ENCODE measurements at regions of chr7 and their contacts with region 1.

Region 1: GRCh38 chr7:20114468-20114867 is 102.7 kb downstream of the MACC1 start:
- DNase-seq: no peak
- ATAC-seq: peak; percentile 90
- H3K4me3 Mint-ChIP-seq: peak overlapping the region; percentile 39
- H3K27ac Mint-ChIP-seq: peak overlapping the region; percentile 54
- H3K4me1 Mint-ChIP-seq: peaks cover 25% of the 10 kb centered on the region
- H3K27me3 Mint-ChIP-seq: no peaks in the 10 kb centered on the region
- CTCF ChIP-seq: no peak

Region 2: GRCh38 chr7:20021831-20022230 is 92.6 kb before region 1 on chr7:
- CTCF ChIA-PET with region 1: no interaction called
- POLR2A ChIA-PET with region 1: interaction called, 4 read pairs
- intact Hi-C with region 1: loop called (anchors 1 kb)
- DNase-seq: no peak
- ATAC-seq: peak; percentile 80
- H3K4me3 Mint-ChIP-seq: peak overlapping the region; percentile 13
- H3K27ac Mint-ChIP-seq: no peak overlapping the region
- H3K4me1 Mint-ChIP-seq: peaks cover 42% of the 10 kb centered on the region
- H3K27me3 Mint-ChIP-seq: no peaks in the 10 kb centered on the region
- CTCF ChIP-seq: no peak

Region 3: GRCh38 chr7:20064974-20065862 is 49.2 kb before region 1 on chr7:
- CTCF ChIA-PET with region 1: no interaction called
- POLR2A ChIA-PET with region 1: no interaction called
- intact Hi-C with region 1: loop called (anchors 5 kb)
- DNase-seq: no peak
- ATAC-seq: peak; percentile 52
- H3K4me3 Mint-ChIP-seq: no peak overlapping the region
- H3K27ac Mint-ChIP-seq: no peak overlapping the region
- H3K4me1 Mint-ChIP-seq: peaks cover 13% of the 10 kb centered on the region
- H3K27me3 Mint-ChIP-seq: no peaks in the 10 kb centered on the region
- CTCF ChIP-seq: no peak

Region 4: GRCh38 chr7:20095436-20095835 is 19.0 kb before region 1 on chr7:
- CTCF ChIA-PET with region 1: no interaction called
- POLR2A ChIA-PET with region 1: no interaction called
- intact Hi-C with region 1: loop called (anchors 2 kb)
- DNase-seq: no peak
- ATAC-seq: no peak
- H3K4me3 Mint-ChIP-seq: no peak overlapping the region
- H3K27ac Mint-ChIP-seq: no peak overlapping the region
- H3K4me1 Mint-ChIP-seq: peaks cover 12% of the 10 kb centered on the region
- H3K27me3 Mint-ChIP-seq: peaks cover 2% of the 10 kb centered on the region
- CTCF ChIP-seq: no peak

Region 5: DNA sequence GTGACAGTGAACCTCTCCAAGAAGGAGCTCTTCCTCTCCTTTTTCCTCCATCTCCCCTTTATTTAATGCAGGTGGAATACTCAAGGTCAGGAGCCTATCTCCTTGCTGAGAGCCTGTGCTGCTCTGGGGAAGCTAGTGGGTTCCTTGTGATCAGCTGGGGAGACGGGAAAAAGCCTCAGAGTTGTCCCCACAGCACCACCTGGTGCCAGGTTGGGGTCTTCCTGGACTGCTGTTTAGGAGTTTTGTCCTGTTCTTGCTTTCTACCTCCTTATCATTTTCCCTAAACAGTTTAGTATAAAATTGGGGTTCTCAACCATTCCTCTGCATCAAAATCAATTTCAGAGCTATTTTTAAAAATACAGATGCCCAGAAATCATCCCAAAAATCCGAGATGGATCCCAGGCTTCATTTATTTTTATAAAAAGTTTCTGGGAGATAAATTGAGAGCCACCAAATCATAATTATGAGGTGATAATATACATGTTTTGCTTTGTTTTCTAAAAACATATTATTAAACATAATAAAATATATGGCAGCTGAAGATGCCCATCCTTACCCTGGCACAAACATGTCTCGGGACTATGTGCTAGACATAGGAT is 58.4 kb after region 1 on chr7:
- CTCF ChIA-PET with region 1: interaction called, 7 read pairs
- POLR2A ChIA-PET with region 1: no interaction called
- intact Hi-C with region 1: loop called (anchors 1 kb)
- DNase-seq: peak; percentile 27
- ATAC-seq: peak; percentile 61
- H3K4me3 Mint-ChIP-seq: no peak overlapping the region
- H3K27ac Mint-ChIP-seq: no peak overlapping the region
- H3K4me1 Mint-ChIP-seq: peaks cover 11% of the 10 kb centered on the region
- H3K27me3 Mint-ChIP-seq: no peaks in the 10 kb centered on the region
- CTCF ChIP-seq: no peak

Region 6: DNA sequence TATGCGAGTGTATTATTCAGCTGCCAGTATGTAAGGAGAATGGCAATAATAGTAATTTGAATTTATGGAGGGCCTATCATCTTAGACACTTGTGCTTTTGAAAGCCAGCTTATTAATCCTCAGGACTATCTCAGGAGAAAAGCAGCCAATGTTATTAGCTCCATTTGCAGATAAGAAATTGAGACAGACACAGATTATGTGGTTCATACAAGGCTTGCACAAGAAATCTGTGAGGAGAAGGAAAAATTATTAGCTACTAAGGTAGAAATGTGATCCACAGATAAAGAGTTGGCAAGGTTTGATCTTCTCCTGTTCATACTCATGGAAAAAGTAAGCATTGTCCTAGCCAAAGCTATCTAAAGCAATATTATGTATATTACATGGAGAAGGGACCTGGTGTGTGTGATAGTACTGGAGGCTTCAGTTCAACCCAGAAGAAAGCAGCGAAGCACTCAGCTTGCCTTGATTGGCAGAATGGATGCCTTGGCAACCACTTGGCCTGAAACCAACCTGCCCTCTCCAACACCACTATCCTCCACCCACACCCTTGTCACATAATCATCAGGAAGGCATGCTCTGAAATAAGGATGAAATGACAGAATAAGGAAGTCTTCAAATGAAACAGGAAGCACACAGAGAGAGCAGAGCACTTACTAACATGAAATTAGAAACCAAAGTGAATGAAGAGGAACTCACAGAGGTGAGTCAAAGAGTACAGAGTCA is 84.7 kb after region 1 on chr7:
- CTCF ChIA-PET with region 1: no interaction called
- POLR2A ChIA-PET with region 1: no interaction called
- intact Hi-C with region 1: loop called (anchors 1 kb)
- DNase-seq: peak; percentile 29
- ATAC-seq: peak; percentile 81
- H3K4me3 Mint-ChIP-seq: peak overlapping the region; percentile 69
- H3K27ac Mint-ChIP-seq: peak overlapping the region; percentile 94
- H3K4me1 Mint-ChIP-seq: peaks cover 55% of the 10 kb centered on the region
- H3K27me3 Mint-ChIP-seq: no peaks in the 10 kb centered on the region
- CTCF ChIP-seq: no peak

Region 7: GRCh38 chr7:20310963-20311742 is 196.7 kb after region 1 on chr7:
- CTCF ChIA-PET with region 1: interaction called, 4 read pairs
- POLR2A ChIA-PET with region 1: no interaction called
- intact Hi-C with region 1: loop called (anchors 2 kb)
- DNase-seq: no peak
- ATAC-seq: peak; percentile 37
- H3K4me3 Mint-ChIP-seq: no peak overlapping the region
- H3K27ac Mint-ChIP-seq: peak overlapping the region; percentile 64
- H3K4me1 Mint-ChIP-seq: peaks cover 16% of the 10 kb centered on the region
- H3K27me3 Mint-ChIP-seq: no peaks in the 10 kb centered on the region
- CTCF ChIP-seq: peak; percentile 31

Measured in activated B cell treated with CpG ODN at 0.5 μM for 24 hours (primary cell).